Mammary epithelial cell (primary cell): ENCODE measurements at regions of chr11 and their contacts with region 1.

Region 1: GRCh38 chr11:62370743-62371440 is 33.6 kb downstream of the ASRGL1 start:
- DNase-seq: no peak
- H3K4me3 ChIP-seq: no peak overlapping the region
- H3K27ac ChIP-seq: no peak overlapping the region
- H3K4me1 ChIP-seq: no peaks in the 10 kb centered on the region
- H3K27me3 ChIP-seq: no peaks in the 10 kb centered on the region
- CTCF ChIP-seq: no peak

Region 2: GRCh38 chr11:61917341-61918109 is 453.4 kb before region 1 on chr11 and contains the start of gene RAB3IL1:
- CTCF ChIA-PET with region 1: no interaction called
- dilution Hi-C with region 1: no loop called
- in situ Hi-C with region 1: no loop called
- intact Hi-C with region 1: no loop called
- DNase-seq: no peak
- H3K4me3 ChIP-seq: peak within 1 kb of the TSS; percentile 38 to 59 (median 57)
- H3K27ac ChIP-seq: no peak within 1 kb of the TSS
- H3K4me1 ChIP-seq: peaks cover 6% of the 10 kb centered on the region
- H3K27me3 ChIP-seq: peaks cover 6% of the 10 kb centered on the region
- CTCF ChIP-seq: no peak
- total RNA-seq, gene RAB3IL1: 1.4 to 2.3 TPM

Region 3: DNA sequence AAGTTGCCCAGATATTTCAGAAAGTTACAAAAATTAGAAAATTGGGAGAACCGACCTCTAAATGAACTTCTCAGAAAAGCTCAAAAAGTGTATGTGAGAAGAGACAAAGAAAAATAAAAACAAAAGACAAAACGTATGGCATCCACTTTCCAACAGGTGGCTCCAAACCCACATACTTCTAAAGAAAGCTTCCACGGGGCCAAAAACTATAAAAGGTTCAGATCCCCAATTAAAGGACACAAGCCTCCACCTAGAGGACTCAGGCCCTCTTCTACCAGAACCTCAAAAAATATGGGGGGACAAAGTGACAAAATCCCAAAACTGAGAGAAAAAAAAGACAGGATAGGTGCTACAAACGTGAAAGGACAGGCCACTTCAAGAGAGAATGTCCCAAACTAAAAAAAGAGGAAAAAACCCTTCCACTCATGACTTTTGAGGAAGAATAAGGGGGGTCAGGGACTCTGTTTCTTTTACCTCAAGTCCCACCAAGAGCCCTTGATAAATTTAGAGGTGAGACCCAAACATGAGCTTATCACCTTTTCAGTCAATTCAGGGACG is 153.6 kb before region 1 on chr11:
- CTCF ChIA-PET with region 1: no interaction called
- dilution Hi-C with region 1: no loop called
- in situ Hi-C with region 1: loop called in 1 of 2 experiments (anchors 10 kb)
- intact Hi-C with region 1: no loop called
- DNase-seq: no peak
- H3K4me3 ChIP-seq: no peak overlapping the region
- H3K27ac ChIP-seq: no peak overlapping the region
- H3K4me1 ChIP-seq: no peaks in the 10 kb centered on the region
- H3K27me3 ChIP-seq: no peaks in the 10 kb centered on the region
- CTCF ChIP-seq: peak; percentile 37 to 62

Region 4: GRCh38 chr11:62233730-62234129 is 137.2 kb before region 1 on chr11:
- CTCF ChIA-PET with region 1: no interaction called
- dilution Hi-C with region 1: no loop called
- in situ Hi-C with region 1: no loop called
- intact Hi-C with region 1: loop called (anchors 5 kb)
- DNase-seq: no peak
- H3K4me3 ChIP-seq: no peak overlapping the region
- H3K27ac ChIP-seq: no peak overlapping the region
- H3K4me1 ChIP-seq: no peaks in the 10 kb centered on the region
- H3K27me3 ChIP-seq: no peaks in the 10 kb centered on the region
- CTCF ChIP-seq: peak in 1 of 2 donors; percentile 33

Region 5: GRCh38 chr11:62337303-62338181 is 33.4 kb before region 1 on chr11 and contains the start of gene ASRGL1:
- CTCF ChIA-PET with region 1: no interaction called
- dilution Hi-C with region 1: no loop called
- in situ Hi-C with region 1: no loop called
- intact Hi-C with region 1: no loop called
- DNase-seq: peak; percentile 40
- H3K4me3 ChIP-seq: peak within 1 kb of the TSS; percentile 48 to 56 (median 51)
- H3K27ac ChIP-seq: no peak within 1 kb of the TSS
- H3K4me1 ChIP-seq: peaks cover 5% of the 10 kb centered on the region
- H3K27me3 ChIP-seq: peaks cover 3% of the 10 kb centered on the region
- CTCF ChIP-seq: no peak
- total RNA-seq, gene ASRGL1: 0.50 TPM in 1 of 2 donors, not detected in the other